A549 (cell line): ENCODE measurements at regions of chr2 and their contacts with region 1.

Region 1: GRCh38 chr2:172172513-172173173 is 69.9 kb upstream of the DLX2 start:
- DNase-seq: peak; percentile 58 to 68
- ATAC-seq: peak; percentile 100
- H3K4me3 ChIP-seq: peak overlapping the region; percentile 61
- H3K27ac ChIP-seq: peak overlapping the region; percentile 62 to 75; a peak in 5 of 6 replicates
- H3K4me1 ChIP-seq: peaks cover 5% of the 10 kb centered on the region; the same call in 1 of the 3 replicates
- CTCF ChIP-seq: peak; percentile 94
- EP300 ChIP-seq: no peak
- POLR2A ChIP-seq: no peak
- RAD21 ChIP-seq: peak; percentile 92 to 99

Region 2: DNA sequence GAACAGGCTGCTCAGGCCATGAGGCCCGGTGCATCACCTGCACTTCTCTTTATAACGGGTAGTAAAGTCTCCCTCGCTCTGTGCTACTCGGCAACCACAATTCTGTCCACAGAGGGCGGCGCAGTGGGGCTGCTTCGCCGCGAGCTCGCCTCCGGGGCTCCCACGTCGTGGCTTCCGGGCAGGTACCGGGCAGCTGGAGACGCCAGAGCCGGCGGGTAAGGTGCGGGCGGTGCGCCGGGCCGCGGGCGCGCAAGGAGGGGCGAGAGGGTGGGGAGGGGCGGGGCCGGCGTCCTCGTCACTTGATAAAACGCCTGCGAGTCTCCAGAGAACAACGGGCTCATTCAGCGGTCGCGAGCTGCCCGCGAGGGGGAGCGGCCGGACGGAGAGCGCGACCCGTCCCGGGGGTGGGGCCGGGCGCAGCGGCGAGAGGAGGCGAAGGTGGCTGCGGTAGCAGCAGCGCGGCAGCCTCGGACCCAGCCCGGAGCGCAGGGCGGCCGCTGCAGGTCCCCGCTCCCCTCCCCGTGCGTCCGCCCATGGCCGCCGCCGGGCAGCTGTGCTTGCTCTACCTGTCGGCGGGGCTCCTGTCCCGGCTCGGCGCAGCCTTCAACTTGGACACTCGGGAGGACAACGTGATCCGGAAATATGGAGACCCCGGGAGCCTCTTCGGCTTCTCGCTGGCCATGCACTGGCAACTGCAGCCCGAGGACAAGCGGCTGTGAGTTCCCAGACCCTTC is 254.8 kb after region 1 on chr2 and contains the start of gene ITGA6:
- CTCF ChIA-PET with region 1: interaction called, 45 read pairs
- POLR2A ChIA-PET with region 1: no interaction called
- DNase-seq: peak; percentile 70 to 84
- ATAC-seq: peak; percentile 85 to 90
- H3K4me3 ChIP-seq: peak within 1 kb of the TSS; percentile 82
- H3K27ac ChIP-seq: peak within 1 kb of the TSS; percentile 80 to 95
- H3K4me1 ChIP-seq: peaks cover 28% of the 10 kb centered on the region
- CTCF ChIP-seq: no peak
- EP300 ChIP-seq: no peak
- POLR2A ChIP-seq: peak; percentile 89
- RAD21 ChIP-seq: peak in 1 of 2 experiments; percentile 42; a peak in 3 of 5 replicates
- polyA plus RNA-seq, gene ITGA6: 27.7 and 41.0 TPM in 2 replicates

Region 3: DNA sequence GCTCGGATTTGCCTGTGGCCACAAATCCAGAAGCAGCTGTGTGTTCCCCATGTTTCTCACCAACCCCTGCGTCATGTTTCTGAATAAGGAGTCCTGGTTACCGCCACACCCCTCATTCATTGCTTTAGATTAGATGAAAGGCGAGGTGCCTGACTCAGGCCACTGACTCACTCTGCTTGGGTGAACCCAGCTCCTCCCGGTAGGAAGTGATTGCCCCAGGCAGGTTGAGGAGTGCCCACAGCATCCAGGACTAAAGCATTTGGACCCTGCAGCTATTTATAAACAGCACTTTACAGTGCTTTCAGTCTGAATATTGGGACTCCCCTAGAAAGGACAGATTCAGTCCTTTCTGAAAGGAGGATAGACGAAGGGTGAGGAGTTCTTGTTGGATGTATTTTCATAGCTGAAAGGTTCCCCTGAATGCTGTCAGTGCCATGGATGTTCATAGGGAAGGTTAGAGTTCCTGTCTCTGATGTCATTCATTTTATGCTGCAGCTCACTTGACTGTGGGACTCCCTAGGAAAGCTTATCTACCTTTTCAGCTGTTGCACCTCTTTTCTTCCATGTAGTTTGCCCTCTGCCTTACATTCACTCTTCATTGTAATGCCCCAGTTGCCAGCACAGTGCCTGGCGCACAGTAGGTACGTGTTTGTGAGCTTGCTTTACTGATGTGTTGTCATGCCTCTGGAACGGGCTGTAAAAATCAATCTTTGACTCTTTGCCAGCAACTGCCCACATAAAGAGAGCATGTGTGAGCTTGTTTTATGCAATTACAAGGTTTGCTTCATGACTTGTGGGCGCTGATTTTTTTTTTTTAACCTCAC is 269.6 kb after region 1 on chr2:
- CTCF ChIA-PET with region 1: interaction called, 11 read pairs
- POLR2A ChIA-PET with region 1: no interaction called
- DNase-seq: peak; percentile 86 to 94
- ATAC-seq: peak; percentile 96 to 98
- H3K4me3 ChIP-seq: peak overlapping the region; percentile 17; the same call in 1 of the 3 replicates
- H3K27ac ChIP-seq: peak overlapping the region; percentile 76 to 82
- H3K4me1 ChIP-seq: peaks cover 60% of the 10 kb centered on the region
- CTCF ChIP-seq: no peak
- EP300 ChIP-seq: no peak
- POLR2A ChIP-seq: no peak
- RAD21 ChIP-seq: no peak

Region 4: DNA sequence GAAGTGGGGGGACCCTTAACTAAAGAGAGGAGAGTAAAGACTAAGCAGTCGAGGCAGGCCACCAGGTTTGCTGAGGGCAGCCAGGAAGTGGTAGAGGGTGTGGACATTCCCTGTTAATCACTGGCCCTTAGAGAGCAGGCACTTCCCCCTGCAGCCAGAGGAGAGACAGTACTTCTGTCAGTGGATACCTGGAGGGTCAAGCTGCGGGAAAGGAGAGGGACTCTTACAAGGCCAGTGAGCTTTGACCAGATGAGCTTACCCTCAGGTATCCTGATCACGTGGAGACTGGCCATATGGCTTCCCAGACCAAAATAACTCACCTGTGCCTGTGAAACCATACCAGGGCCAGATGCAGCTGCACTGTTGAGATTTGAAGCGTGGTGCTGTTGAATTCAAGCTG is 283.4 kb after region 1 on chr2:
- CTCF ChIA-PET with region 1: interaction called, 403 read pairs
- POLR2A ChIA-PET with region 1: no interaction called
- DNase-seq: no peak
- ATAC-seq: peak; percentile 57 to 61; a peak in 5 of 6 replicates
- H3K4me3 ChIP-seq: no peak overlapping the region
- H3K27ac ChIP-seq: no peak overlapping the region
- H3K4me1 ChIP-seq: 0 out of 3 replicates have a peak, but pooled peaks cover 6% of the 10 kb centered on the region
- CTCF ChIP-seq: no peak
- EP300 ChIP-seq: no peak
- POLR2A ChIP-seq: no peak
- RAD21 ChIP-seq: no peak

Region 5: DNA sequence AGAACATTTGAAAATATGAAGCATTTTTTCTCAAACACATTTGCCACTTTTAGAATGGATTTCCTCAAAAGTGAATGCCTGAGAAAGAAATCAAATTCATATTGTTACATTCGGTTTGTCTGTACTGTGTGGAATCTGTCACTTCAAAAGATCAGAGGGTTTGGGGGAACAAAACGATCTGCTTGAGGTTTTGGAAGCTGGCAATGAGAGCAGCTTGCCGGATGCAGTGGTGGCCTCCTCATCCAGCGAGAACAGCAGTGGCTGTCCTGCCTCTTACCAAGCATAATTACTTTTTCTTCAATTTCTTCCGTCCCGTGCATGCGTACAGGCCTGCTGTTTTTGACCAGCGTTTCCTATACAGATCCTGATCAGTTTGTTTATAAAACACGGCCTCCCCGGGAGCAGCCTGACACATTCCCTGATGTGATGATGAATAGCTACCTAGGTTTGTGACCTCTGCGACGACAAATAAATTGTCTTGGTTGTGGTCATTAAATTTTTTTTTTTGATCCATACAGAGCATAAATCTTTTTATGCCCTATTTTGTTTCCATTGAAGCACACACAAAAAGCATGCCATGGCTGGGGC is 299.9 kb after region 1 on chr2:
- CTCF ChIA-PET with region 1: interaction called, 403 read pairs
- POLR2A ChIA-PET with region 1: no interaction called
- DNase-seq: no peak
- ATAC-seq: no peak
- H3K4me3 ChIP-seq: no peak overlapping the region
- H3K27ac ChIP-seq: no peak overlapping the region
- H3K4me1 ChIP-seq: no peaks in the 10 kb centered on the region
- CTCF ChIP-seq: no peak
- EP300 ChIP-seq: no peak
- POLR2A ChIP-seq: no peak
- RAD21 ChIP-seq: no peak

Region 6: GRCh38 chr2:172484253-172484652 is 311.6 kb after region 1 on chr2:
- CTCF ChIA-PET with region 1: interaction called, 16 read pairs
- POLR2A ChIA-PET with region 1: no interaction called
- DNase-seq: peak in 1 of 2 experiments; percentile 24
- ATAC-seq: peak; percentile 37 to 54; a peak in 2 of 6 replicates
- H3K4me3 ChIP-seq: no peak overlapping the region
- H3K27ac ChIP-seq: no peak overlapping the region
- H3K4me1 ChIP-seq: no peaks in the 10 kb centered on the region
- CTCF ChIP-seq: peak; percentile 55
- EP300 ChIP-seq: no peak
- POLR2A ChIP-seq: no peak
- RAD21 ChIP-seq: peak; percentile 60 to 61